H1 (cell line): ENCODE measurements at regions of chr10 and their contacts with region 1.

Region 1: GRCh38 chr10:47361293-47361692 is 13.1 kb downstream of the RBP3 start:
- DNase-seq: peak; percentile 44 to 93
- H3K4me3 ChIP-seq: no peak overlapping the region
- H3K27ac ChIP-seq: no peak overlapping the region
- H3K4me1 ChIP-seq: peaks cover 2 to 7% (median 3%) of the 10 kb centered on the region in 4 experiments; a peak in 3 of 7 replicates
- H3K27me3 ChIP-seq: no peaks in the 10 kb centered on the region
- CTCF ChIP-seq: peak; percentile 81 to 95 (median 91)
- EP300 ChIP-seq: no peak
- POLR2A ChIP-seq: no peak
- RAD21 ChIP-seq: peak; percentile 66 to 79

Region 2: DNA sequence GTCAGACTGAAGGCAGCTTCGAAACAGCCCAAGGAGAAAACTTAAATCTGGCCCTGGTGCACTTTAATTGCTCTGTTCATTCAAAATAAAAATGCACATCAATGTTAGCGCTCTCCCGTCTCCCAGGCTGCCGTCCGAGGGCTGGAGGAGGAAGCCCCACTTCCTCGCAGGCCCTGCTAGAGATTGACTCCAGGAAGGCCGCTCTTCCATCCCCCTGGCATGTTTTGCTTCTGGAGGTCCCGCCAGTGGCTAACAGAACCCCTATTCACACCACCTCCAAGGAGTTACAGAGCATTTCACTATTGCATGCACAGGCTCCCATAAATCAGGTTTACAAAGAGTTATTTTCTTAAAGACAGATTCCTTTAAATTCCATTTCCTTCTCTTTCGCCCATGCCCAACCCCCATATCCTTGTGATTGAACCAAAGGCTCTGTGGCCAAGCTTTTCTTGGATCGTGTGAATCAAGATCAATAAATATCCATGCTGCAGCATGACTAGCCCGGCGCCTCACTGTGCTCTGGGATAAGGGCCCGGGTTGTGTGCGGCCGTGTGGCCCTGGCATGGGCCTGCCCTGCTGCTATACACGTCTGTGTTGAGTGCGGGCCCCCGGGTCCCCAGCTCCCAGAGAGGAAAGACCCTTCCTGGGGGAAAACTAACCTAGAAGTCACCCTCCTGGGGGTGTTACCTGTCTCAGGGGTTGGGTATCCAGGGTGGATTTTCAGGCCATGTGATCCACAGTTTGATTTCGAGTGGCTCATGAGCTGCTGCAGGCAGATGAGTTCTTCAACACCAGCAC is 180.0 kb before region 1 on chr10:
- CTCF ChIA-PET with region 1: no interaction called
- POLR2A ChIA-PET with region 1: no interaction called
- DNase-seq: no peak
- H3K4me3 ChIP-seq: no peak overlapping the region
- H3K27ac ChIP-seq: no peak overlapping the region
- H3K4me1 ChIP-seq: no peaks in the 10 kb centered on the region
- H3K27me3 ChIP-seq: no peaks in the 10 kb centered on the region
- CTCF ChIP-seq: no peak
- EP300 ChIP-seq: no peak
- POLR2A ChIP-seq: no peak
- RAD21 ChIP-seq: no peak

Region 3: DNA sequence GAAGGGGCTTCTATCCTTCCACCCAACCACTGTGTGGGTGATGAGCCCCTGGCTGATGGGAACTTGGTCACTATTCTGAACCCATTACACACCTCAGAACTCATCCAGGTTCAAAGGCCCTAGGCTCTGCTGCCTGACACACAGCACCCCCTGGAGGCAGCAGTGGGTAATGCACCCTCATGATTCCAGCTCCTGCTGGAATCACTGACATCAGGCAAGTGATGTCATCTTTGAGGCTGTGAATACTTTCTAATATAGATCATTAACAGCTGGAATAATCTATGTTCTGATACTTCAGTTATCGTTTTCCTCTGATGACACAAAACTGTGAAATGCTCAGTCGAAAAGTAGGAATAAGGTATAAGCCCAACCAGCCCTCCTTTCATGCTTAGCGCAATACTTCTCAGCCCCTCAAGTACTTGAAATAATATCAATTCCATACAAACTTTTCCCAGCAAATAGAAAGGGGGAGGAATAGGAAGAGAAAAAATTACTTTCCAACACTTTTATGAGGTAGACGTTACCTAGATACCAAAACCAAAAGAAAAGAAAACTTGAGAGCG is 20.6 kb before region 1 on chr10:
- CTCF ChIA-PET with region 1: interaction called, 132 read pairs
- POLR2A ChIA-PET with region 1: no interaction called
- DNase-seq: peak; percentile 51 to 95
- H3K4me3 ChIP-seq: no peak overlapping the region
- H3K27ac ChIP-seq: no peak overlapping the region
- H3K4me1 ChIP-seq: peaks cover 0 to 3% (median under 1%) of the 10 kb centered on the region in 4 experiments; a peak in 3 of 7 replicates
- H3K27me3 ChIP-seq: no peaks in the 10 kb centered on the region
- CTCF ChIP-seq: peak; percentile 77 to 98 (median 96)
- EP300 ChIP-seq: no peak
- POLR2A ChIP-seq: no peak
- RAD21 ChIP-seq: peak; percentile 73 to 79

Region 4: DNA sequence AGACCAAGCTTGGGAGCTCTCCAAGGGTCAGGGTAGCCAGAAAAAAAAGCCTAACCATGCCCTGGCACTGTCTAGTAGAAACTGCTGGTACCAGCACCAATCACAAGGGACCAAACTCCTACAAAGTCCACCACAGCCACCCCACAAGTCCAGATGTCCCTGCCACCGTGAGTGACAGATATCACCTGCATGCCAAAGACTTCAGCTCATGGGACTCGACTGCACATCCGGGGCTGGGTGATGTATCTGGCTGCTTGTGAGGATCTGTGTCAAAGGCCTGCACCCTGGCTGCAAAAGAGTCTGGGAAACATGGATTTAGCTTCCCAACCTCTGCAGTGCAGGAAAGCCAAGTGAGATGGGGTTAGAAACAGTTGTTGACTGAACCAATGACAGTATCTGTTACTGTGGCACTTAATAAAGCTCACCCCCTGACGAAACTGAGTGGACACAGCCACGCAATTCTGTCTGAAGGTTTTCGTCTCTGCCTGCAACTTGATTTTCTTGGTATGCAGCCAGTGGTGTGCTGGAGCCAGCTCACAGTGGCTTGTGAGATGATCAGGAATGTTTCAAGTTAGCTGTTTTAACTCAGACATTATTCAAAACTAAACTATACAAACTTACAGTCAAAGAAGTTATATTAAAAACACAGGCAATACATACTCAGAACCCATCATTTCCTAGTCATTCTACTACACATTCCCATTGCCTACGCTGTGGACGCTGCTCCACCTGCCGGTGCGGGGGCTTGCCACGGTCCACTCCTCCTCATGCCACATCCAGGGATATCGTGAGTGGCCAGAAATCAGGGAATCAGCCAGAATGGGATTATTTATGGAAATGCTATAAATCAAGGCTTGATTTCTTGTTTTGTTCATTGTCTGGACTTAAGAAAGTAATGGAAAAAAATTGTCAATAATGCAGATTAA is 13.6 kb after region 1 on chr10:
- CTCF ChIA-PET with region 1: interaction called, 49 read pairs
- POLR2A ChIA-PET with region 1: interaction called, 4 read pairs
- DNase-seq: peak in 1 of 2 experiments; percentile 26
- H3K4me3 ChIP-seq: no peak overlapping the region
- H3K27ac ChIP-seq: no peak overlapping the region
- H3K4me1 ChIP-seq: peaks cover 0 to 14% (median 5%) of the 10 kb centered on the region in 4 experiments
- H3K27me3 ChIP-seq: no peaks in the 10 kb centered on the region
- CTCF ChIP-seq: no peak
- EP300 ChIP-seq: no peak
- POLR2A ChIP-seq: no peak
- RAD21 ChIP-seq: no peak

Region 5: GRCh38 chr10:47384148-47384921 is 23.0 kb after region 1 on chr10 and contains the start of gene ZNF488:
- CTCF ChIA-PET with region 1: interaction called, 49 read pairs
- POLR2A ChIA-PET with region 1: interaction called, 8 read pairs
- DNase-seq: peak; percentile 80 to 91
- H3K4me3 ChIP-seq: peak within 1 kb of the TSS; percentile 67 to 91 (median 74)
- H3K27ac ChIP-seq: peak within 1 kb of the TSS; percentile 52; the same call in 1 of the 2 replicates
- H3K4me1 ChIP-seq: peaks cover 0 to 8% (median 4%) of the 10 kb centered on the region in 4 experiments; a peak in 4 of 7 replicates
- H3K27me3 ChIP-seq: peaks cover 0 to 2% (median 1%) of the 10 kb centered on the region in 4 experiments; a peak in 1 of 7 replicates
- CTCF ChIP-seq: no peak
- EP300 ChIP-seq: no peak
- POLR2A ChIP-seq: peak; percentile 58 to 79
- RAD21 ChIP-seq: no peak
- total RNA-seq, gene ZNF488: 7.7 and 7.9 TPM in 2 replicates

Region 6: DNA sequence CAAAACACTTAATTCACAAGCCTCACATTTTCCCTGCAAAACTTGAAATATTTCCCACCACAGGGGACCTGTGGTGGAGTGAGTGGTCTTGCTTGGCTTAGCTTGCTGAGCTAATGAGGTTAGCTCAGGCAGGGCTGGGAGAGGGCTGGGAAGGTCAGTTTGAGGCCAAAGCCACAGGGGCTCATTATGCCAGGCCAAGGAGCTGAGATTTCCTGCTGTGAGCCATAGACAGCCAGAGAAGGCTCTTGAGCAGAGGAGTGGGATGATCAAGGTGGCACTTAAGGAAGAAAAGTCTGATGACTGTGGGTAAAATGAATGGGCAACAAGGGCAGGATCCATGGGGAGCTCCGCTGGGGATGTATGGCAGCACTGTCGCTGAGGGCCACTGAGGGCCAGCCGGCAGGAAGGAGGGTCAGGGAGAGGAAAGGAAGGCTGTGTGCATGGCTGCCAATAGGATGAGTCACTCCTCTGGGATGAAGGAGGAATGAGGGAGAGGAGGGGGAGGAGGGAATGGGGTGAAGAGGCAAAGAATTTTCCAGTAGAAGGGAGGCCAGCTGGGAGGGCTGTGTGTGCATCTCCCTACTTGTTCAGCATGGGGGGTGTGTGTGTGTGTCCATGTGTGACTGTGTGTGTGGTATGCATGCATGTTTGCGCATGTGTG is 41.5 kb after region 1 on chr10:
- CTCF ChIA-PET with region 1: interaction called, 25 read pairs
- POLR2A ChIA-PET with region 1: no interaction called
- DNase-seq: peak; percentile 51 to 68
- H3K4me3 ChIP-seq: no peak overlapping the region
- H3K27ac ChIP-seq: 0 out of 2 replicates have a peak overlapping the region, but pooled peaks have one; percentile 32
- H3K4me1 ChIP-seq: peaks cover 7 to 27% (median 20%) of the 10 kb centered on the region in 4 experiments
- H3K27me3 ChIP-seq: no peaks in the 10 kb centered on the region; a peak in 1 of 7 replicates
- CTCF ChIP-seq: no peak
- EP300 ChIP-seq: no peak
- POLR2A ChIP-seq: no peak
- RAD21 ChIP-seq: no peak